CD8-positive, alpha-beta T cell (primary cell): ENCODE measurements at regions of chr10 and their contacts with region 1.

Region 1: GRCh38 chr10:71812016-71812912 is 38.8 kb downstream of the PSAP start:
- DNase-seq: peak; percentile 63 to 91 (median 79)
- ATAC-seq: peak; percentile 91
- H3K4me3 ChIP-seq: no peak overlapping the region
- H3K4me3 Mint-ChIP-seq: no peak overlapping the region
- H3K27ac ChIP-seq: no peak overlapping the region
- H3K27ac Mint-ChIP-seq: no peak overlapping the region
- H3K4me1 ChIP-seq: peaks cover 4% of the 10 kb centered on the region
- H3K4me1 Mint-ChIP-seq: peaks cover 2% of the 10 kb centered on the region
- H3K27me3 ChIP-seq: no peaks in the 10 kb centered on the region
- H3K27me3 Mint-ChIP-seq: no peaks in the 10 kb centered on the region
- CTCF ChIP-seq: peak; percentile 79

Region 2: GRCh38 chr10:69988094-69988493 is 1824.2 kb before region 1 on chr10:
- CTCF ChIA-PET with region 1: no interaction called
- POLR2A ChIA-PET with region 1: no interaction called
- intact Hi-C with region 1: no loop called
- DNase-seq: no peak
- ATAC-seq: no peak
- H3K4me3 ChIP-seq: no peak overlapping the region
- H3K4me3 Mint-ChIP-seq: no peak overlapping the region
- H3K27ac ChIP-seq: no peak overlapping the region
- H3K27ac Mint-ChIP-seq: no peak overlapping the region
- H3K4me1 ChIP-seq: no peaks in the 10 kb centered on the region
- H3K4me1 Mint-ChIP-seq: no peaks in the 10 kb centered on the region
- H3K27me3 ChIP-seq: peaks cover under 1 to 9% of the 10 kb centered on the region in 2 experiments
- H3K27me3 Mint-ChIP-seq: peaks cover 7% of the 10 kb centered on the region
- CTCF ChIP-seq: no peak

Region 3: GRCh38 chr10:71314028-71314693 is 498.1 kb before region 1 on chr10:
- CTCF ChIA-PET with region 1: interaction called, 13 read pairs
- POLR2A ChIA-PET with region 1: no interaction called
- intact Hi-C with region 1: loop called (anchors 1 kb)
- DNase-seq: peak in 8 of 9 experiments; percentile 41 to 80 (median 62)
- ATAC-seq: peak; percentile 45
- H3K4me3 ChIP-seq: no peak overlapping the region
- H3K4me3 Mint-ChIP-seq: no peak overlapping the region
- H3K27ac ChIP-seq: no peak overlapping the region
- H3K27ac Mint-ChIP-seq: no peak overlapping the region
- H3K4me1 ChIP-seq: peaks cover 6% of the 10 kb centered on the region
- H3K4me1 Mint-ChIP-seq: peaks cover 11% of the 10 kb centered on the region
- H3K27me3 ChIP-seq: no peaks in the 10 kb centered on the region
- H3K27me3 Mint-ChIP-seq: peaks cover 7% of the 10 kb centered on the region
- CTCF ChIP-seq: peak; percentile 86

Region 4: GRCh38 chr10:71319042-71319799 is 493.0 kb before region 1 on chr10 and contains the start of gene SLC29A3:
- CTCF ChIA-PET with region 1: interaction called, 13 read pairs
- POLR2A ChIA-PET with region 1: no interaction called
- intact Hi-C with region 1: loop called (anchors 1 kb)
- DNase-seq: peak; percentile 69 to 92 (median 80)
- ATAC-seq: peak; percentile 87
- H3K4me3 ChIP-seq: peak within 1 kb of the TSS; percentile 83 to 91
- H3K4me3 Mint-ChIP-seq: peak within 1 kb of the TSS; percentile 92
- H3K27ac ChIP-seq: peak within 1 kb of the TSS; percentile 58 to 61
- H3K27ac Mint-ChIP-seq: peak within 1 kb of the TSS; percentile 80
- H3K4me1 ChIP-seq: peaks cover 18% of the 10 kb centered on the region
- H3K4me1 Mint-ChIP-seq: peaks cover 45% of the 10 kb centered on the region
- H3K27me3 ChIP-seq: no peaks in the 10 kb centered on the region
- H3K27me3 Mint-ChIP-seq: no peaks in the 10 kb centered on the region
- CTCF ChIP-seq: peak; percentile 38
- total RNA-seq, gene SLC29A3: 1.4 to 2.9 TPM

Region 5: DNA sequence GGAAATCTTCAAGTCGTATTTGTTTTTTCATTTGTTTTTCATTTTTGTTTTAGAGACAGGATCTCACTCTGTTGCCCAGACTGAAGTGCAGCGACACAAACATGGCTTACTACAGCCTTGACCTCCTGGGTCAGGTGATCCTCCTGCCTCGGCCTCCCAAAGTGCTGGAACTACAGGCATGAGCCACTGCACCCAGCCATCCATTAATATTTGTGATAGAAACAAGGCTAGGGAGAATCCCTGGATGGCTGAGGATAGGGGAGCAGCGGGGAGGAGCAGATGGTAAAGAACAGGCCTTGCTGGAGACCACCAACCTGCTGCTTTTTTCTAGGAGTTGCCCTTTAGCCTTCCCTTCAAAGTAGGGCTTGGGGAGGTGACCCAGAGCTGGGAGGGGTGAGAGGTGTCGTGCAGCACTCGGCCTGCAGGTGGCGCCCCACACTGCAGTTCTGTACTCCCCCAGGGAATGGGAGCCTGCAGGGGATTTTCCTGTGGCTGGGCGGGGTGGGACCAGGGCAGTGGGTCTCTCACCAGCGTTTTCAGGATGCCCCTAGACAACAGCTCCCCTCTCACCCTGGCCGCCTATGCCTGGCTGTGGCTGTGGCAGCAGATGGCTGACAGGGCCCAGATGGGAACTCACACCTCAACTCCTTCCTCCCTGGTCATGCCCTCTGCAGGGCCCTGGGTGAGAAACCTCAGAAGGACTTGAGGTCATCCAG is 428.1 kb before region 1 on chr10:
- CTCF ChIA-PET with region 1: interaction called, 8 read pairs
- POLR2A ChIA-PET with region 1: no interaction called
- intact Hi-C with region 1: loop called in 1 of 2 experiments (anchors 1 kb)
- DNase-seq: peak; percentile 56 to 83 (median 76)
- ATAC-seq: peak; percentile 89
- H3K4me3 ChIP-seq: no peak overlapping the region
- H3K4me3 Mint-ChIP-seq: no peak overlapping the region
- H3K27ac ChIP-seq: no peak overlapping the region
- H3K27ac Mint-ChIP-seq: no peak overlapping the region
- H3K4me1 ChIP-seq: no peaks in the 10 kb centered on the region
- H3K4me1 Mint-ChIP-seq: no peaks in the 10 kb centered on the region
- H3K27me3 ChIP-seq: peaks cover 0 to 3% of the 10 kb centered on the region in 2 experiments
- H3K27me3 Mint-ChIP-seq: no peaks in the 10 kb centered on the region
- CTCF ChIP-seq: peak; percentile 83

Region 6: GRCh38 chr10:71486484-71487114 is 325.7 kb before region 1 on chr10:
- CTCF ChIA-PET with region 1: interaction called, 3 read pairs
- POLR2A ChIA-PET with region 1: no interaction called
- intact Hi-C with region 1: loop called in 1 of 2 experiments (anchors 5 kb)
- DNase-seq: peak in 4 of 9 experiments; percentile 13 to 34 (median 23)
- ATAC-seq: no peak
- H3K4me3 ChIP-seq: no peak overlapping the region
- H3K4me3 Mint-ChIP-seq: no peak overlapping the region
- H3K27ac ChIP-seq: no peak overlapping the region
- H3K27ac Mint-ChIP-seq: no peak overlapping the region
- H3K4me1 ChIP-seq: no peaks in the 10 kb centered on the region
- H3K4me1 Mint-ChIP-seq: no peaks in the 10 kb centered on the region
- H3K27me3 ChIP-seq: no peaks in the 10 kb centered on the region
- H3K27me3 Mint-ChIP-seq: peaks cover 5% of the 10 kb centered on the region
- CTCF ChIP-seq: no peak

Region 7: GRCh38 chr10:71608819-71609768 is 203.2 kb before region 1 on chr10:
- CTCF ChIA-PET with region 1: interaction called, 6 read pairs
- POLR2A ChIA-PET with region 1: no interaction called
- intact Hi-C with region 1: loop called in 1 of 2 experiments (anchors 5 kb)
- DNase-seq: peak; percentile 34 to 69 (median 63)
- ATAC-seq: peak; percentile 52
- H3K4me3 ChIP-seq: no peak overlapping the region
- H3K4me3 Mint-ChIP-seq: no peak overlapping the region
- H3K27ac ChIP-seq: no peak overlapping the region
- H3K27ac Mint-ChIP-seq: no peak overlapping the region
- H3K4me1 ChIP-seq: no peaks in the 10 kb centered on the region
- H3K4me1 Mint-ChIP-seq: no peaks in the 10 kb centered on the region
- H3K27me3 ChIP-seq: no peaks in the 10 kb centered on the region
- H3K27me3 Mint-ChIP-seq: peaks cover 13% of the 10 kb centered on the region
- CTCF ChIP-seq: peak; percentile 60

Region 8: GRCh38 chr10:71665456-71665855 is 146.8 kb before region 1 on chr10:
- CTCF ChIA-PET with region 1: interaction called, 11 read pairs
- POLR2A ChIA-PET with region 1: no interaction called
- intact Hi-C with region 1: loop called (anchors 1 kb)
- DNase-seq: no peak
- ATAC-seq: no peak
- H3K4me3 ChIP-seq: no peak overlapping the region
- H3K4me3 Mint-ChIP-seq: no peak overlapping the region
- H3K27ac ChIP-seq: no peak overlapping the region
- H3K27ac Mint-ChIP-seq: no peak overlapping the region
- H3K4me1 ChIP-seq: peaks cover 18% of the 10 kb centered on the region
- H3K4me1 Mint-ChIP-seq: peaks cover 21% of the 10 kb centered on the region
- H3K27me3 ChIP-seq: no peaks in the 10 kb centered on the region
- H3K27me3 Mint-ChIP-seq: no peaks in the 10 kb centered on the region
- CTCF ChIP-seq: no peak